ENCODE measurements at regions of chr1 and their contacts with region 1.

Region 1: GRCh38 chr1:7902478-7903085 is 38.1 kb downstream of the TNFRSF9 start:
- DNase-seq: peak; percentile 38 to 73
- H3K4me3 ChIP-seq: peak overlapping the region; percentile 3 to 45
- H3K27ac ChIP-seq: no peak overlapping the region
- H3K4me1 ChIP-seq: peaks cover 0 to 5% (median 2%) of the 10 kb centered on the region in 4 donors
- H3K27me3 ChIP-seq: no peaks in the 10 kb centered on the region
- CTCF ChIP-seq: peak; percentile 72 to 78

Region 2: DNA sequence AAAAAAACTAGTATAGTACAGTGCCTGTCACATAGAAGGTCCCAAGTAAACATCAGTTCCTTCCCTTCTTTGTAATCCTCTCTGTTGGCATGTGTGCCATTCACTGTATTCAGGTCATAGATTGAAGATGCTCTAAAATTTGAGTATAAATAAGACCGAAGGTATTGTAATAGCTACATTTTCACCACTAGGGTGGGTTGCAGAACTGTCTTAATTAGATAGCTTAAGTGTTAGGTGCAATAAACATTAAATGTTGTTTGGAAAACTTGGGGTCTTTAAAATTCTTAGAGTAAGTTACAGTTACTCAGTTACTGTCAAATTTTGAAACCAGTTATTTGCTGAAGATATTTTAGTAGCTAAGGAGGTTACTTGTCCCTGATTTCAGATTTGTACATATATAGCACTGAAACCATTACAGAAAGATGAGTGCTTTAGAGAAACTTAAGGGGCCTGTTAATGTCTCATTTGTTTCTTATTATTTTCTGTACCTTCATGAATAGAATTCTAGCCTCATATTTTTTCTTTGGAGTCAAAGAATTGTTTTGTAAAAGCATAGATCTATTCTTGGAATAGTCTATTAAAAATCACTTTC is 94.2 kb before region 1 on chr1:
- intact Hi-C with region 1: loop called (anchors 10 kb)
- DNase-seq: no peak
- H3K4me3 ChIP-seq: no peak overlapping the region
- H3K27ac ChIP-seq: no peak overlapping the region
- H3K4me1 ChIP-seq: no peaks in the 10 kb centered on the region
- H3K27me3 ChIP-seq: no peaks in the 10 kb centered on the region
- CTCF ChIP-seq: peak; percentile 46 to 67

Region 3: DNA sequence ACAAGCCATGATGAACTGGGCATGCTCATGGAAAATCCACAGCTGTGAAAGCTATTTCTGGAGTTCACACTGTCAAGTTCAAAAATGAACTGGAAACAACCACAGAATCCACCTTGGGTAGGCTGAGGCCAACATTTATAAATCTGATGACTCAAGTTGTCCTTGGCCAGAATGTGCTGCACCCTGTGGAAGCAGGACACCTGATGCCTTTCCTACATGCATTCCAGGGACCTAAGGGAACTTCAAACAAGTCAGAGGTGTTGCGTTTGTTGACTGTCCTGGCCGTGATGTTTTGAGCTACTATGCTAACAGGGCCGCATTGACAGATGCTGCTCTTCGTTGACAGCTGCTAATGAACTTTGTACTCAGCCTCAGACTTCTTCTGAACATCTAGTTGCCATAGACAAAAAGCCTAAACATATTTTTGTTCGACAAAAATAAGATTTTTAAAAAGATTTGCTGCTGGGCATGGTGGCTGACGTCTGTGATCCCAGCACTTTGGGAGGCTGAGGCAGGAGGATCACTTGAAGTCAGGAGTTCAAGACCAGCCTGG is 287.4 kb after region 1 on chr1:
- intact Hi-C with region 1: no loop called
- DNase-seq: no peak
- H3K4me3 ChIP-seq: no peak overlapping the region
- H3K27ac ChIP-seq: peak overlapping the region; percentile 5 to 18
- H3K4me1 ChIP-seq: peaks cover 0 to 12% (median 9%) of the 10 kb centered on the region in 4 donors
- H3K27me3 ChIP-seq: no peaks in the 10 kb centered on the region
- CTCF ChIP-seq: no peak

Measured in tibial artery (tissue), 4 donors.